ENCODE measurements at regions of chr9 and their contacts with region 1.

Region 1: GRCh38 chr9:94703488-94704140 is 22.9 kb upstream of the AOPEP start:
- DNase-seq: no peak
- H3K4me3 ChIP-seq: no peak overlapping the region
- H3K27ac ChIP-seq: no peak overlapping the region
- H3K4me1 ChIP-seq: peaks cover 1% of the 10 kb centered on the region
- H3K27me3 ChIP-seq: no peaks in the 10 kb centered on the region
- CTCF ChIP-seq: no peak
- EP300 ChIP-seq: no peak
- POLR2A ChIP-seq: no peak

Region 2: DNA sequence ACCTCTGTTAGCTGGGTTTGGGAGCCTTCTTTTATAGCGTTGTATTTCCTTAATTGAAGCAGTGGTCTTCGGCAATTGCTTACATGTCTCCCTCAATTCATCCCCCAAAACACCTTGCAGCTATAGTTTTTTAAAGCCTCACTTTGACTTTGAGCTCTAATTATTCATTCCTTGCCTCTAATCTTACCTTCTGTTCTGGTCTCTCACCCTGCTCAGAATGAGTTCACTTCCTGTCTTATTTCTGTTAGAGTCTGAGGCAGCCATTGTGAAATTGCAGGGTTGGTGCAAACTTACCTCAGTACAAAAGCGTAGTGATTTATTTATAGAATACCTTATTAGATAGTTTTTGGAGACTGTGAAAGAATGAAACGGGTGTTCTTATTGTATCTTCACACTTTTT is 57.9 kb after region 1 on chr9:
- intact Hi-C with region 1: loop called in 1 of 4 experiments (anchors 2 kb)
- DNase-seq: no peak
- H3K4me3 ChIP-seq: no peak overlapping the region
- H3K27ac ChIP-seq: no peak overlapping the region
- H3K4me1 ChIP-seq: no peaks in the 10 kb centered on the region
- H3K27me3 ChIP-seq: no peaks in the 10 kb centered on the region
- CTCF ChIP-seq: no peak
- EP300 ChIP-seq: no peak
- POLR2A ChIP-seq: no peak